ENCODE measurements at regions of chr20 and their contacts with region 1.

Region 1: GRCh38 chr20:56575157-56575556 is 42.1 kb downstream of the FAM209B start:
- DNase-seq: no peak

Region 2: DNA sequence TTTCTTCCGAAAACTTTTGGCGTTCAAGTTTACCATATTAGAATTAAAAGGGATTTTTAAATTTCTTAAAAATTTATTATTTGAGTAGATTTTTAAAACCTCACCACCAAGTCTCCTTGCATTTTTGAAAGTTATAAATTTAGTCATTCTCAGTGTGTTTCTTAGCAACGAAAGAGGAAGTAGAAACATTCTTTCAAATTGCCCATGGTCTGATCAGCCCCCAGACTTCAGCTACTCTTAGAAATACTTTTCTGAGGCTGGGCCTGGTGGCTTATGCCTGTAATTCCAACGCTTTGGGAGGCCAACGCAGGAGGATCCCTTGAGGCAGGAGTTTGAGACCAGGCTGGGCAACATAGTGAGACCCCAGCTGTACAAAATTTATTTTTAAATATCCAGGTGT is 121.8 kb before region 1 on chr20:
- CTCF ChIA-PET with region 1: no interaction called
- POLR2A ChIA-PET with region 1: no interaction called
- DNase-seq: no peak

Region 3: DNA sequence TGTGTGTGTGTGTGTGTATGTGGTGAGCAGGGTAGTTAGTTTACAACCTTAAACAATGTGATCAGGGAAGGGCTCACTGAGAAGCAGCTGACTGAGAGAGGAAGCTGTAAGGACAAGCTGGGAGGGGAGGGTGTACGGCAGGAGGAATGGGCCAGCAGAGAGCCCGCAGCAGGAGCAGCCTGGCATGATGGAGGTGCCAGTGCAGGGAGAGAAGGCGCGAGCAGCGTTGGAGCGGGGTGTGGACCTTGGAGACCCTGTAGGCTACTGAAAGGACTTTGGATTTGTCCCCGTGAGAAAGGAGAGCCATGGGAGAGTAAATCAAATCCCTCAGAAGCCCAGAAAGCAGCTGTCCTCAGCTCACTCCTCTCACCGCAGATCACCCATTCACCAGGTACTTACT is 23.6 kb before region 1 on chr20:
- CTCF ChIA-PET with region 1: interaction called, 11 read pairs
- POLR2A ChIA-PET with region 1: no interaction called
- DNase-seq: no peak

Region 4: DNA sequence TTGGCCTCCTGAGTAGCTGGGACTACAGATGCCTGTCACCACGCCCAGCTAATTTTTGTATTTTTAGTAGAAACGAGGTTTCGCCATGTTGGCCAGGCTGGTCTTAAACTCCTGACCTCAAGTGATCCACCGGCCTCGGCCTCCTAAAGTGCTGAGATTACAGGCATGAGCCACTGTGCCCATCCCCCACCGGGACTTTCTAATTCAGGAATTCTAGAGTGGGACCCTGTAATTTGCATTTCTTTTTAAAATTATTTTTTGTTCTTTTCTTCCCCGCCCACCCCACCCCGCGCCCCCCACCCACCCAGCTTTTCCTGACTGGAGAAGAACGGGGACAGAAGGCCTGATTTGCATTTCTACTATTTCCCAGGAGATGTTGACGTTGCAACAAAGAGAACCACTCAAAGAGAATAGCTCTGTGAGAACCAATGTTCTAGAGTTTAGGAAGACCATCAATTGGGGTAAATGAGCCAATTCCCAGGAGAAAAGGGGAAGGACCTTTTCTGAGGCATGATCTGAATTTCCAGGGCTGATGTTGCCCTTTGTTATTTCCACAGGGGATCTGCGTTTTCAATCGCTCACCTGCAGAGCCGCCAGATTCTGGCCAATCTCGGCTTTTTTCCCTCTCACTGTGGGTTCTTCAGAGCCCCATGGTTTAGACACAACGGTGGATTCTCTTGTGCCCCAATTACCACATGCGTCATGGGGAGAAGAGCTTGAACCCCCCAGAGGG is 20.8 kb after region 1 on chr20:
- CTCF ChIA-PET with region 1: no interaction called
- POLR2A ChIA-PET with region 1: no interaction called
- DNase-seq: no peak

Region 5: GRCh38 chr20:56676001-56676400 is 100.8 kb after region 1 on chr20:
- CTCF ChIA-PET with region 1: no interaction called
- POLR2A ChIA-PET with region 1: no interaction called
- DNase-seq: no peak

Measured in HEK293T (cell line).